A673 (cell line): ENCODE measurements at regions of chr6 and their contacts with region 1.

Region 1: DNA sequence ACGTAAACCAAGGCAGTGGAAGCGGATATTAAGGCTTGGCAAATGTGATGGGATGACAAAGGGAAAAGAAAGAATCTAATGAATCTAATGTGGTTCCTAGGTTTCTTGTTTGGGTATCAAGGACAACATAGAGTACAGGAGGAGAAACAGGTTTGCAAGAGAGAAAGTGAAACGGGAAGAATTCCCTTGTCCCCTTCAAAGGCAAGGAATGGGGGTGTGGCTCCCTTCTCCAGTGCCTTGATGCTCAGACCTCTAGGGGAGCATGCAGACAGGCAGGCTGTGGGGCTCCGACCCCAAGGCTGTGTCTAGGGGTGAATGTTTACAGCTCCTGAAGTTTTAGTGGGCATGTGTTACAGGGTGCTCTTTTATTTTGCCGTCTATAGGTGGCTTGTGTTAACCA is 317.5 kb upstream of the HSF2 start:
- DNase-seq: no peak
- H3K4me3 ChIP-seq: no peak overlapping the region
- H3K27ac ChIP-seq: no peak overlapping the region
- H3K4me1 ChIP-seq: peaks cover 3% of the 10 kb centered on the region
- H3K27me3 ChIP-seq: peaks cover 5% of the 10 kb centered on the region
- CTCF ChIP-seq: no peak

Region 2: GRCh38 chr6:122422614-122423267 is 340.8 kb after region 1 on chr6:
- CTCF ChIA-PET with region 1: no interaction called
- POLR2A ChIA-PET with region 1: no interaction called
- intact Hi-C with region 1: no loop called
- DNase-seq: no peak
- H3K4me3 ChIP-seq: no peak overlapping the region
- H3K27ac ChIP-seq: no peak overlapping the region
- H3K4me1 ChIP-seq: no peaks in the 10 kb centered on the region
- H3K27me3 ChIP-seq: no peaks in the 10 kb centered on the region
- CTCF ChIP-seq: no peak

Region 3: GRCh38 chr6:123062670-123063069 is 980.7 kb after region 1 on chr6:
- CTCF ChIA-PET with region 1: no interaction called
- POLR2A ChIA-PET with region 1: interaction called, 11 read pairs
- intact Hi-C with region 1: no loop called
- DNase-seq: peak; percentile 77
- H3K4me3 ChIP-seq: no peak overlapping the region
- H3K27ac ChIP-seq: peak overlapping the region; percentile 72
- H3K4me1 ChIP-seq: peaks cover 43% of the 10 kb centered on the region
- H3K27me3 ChIP-seq: no peaks in the 10 kb centered on the region
- CTCF ChIP-seq: no peak